ENCODE measurements at regions of chr11 and their contacts with region 1.

Region 1: DNA sequence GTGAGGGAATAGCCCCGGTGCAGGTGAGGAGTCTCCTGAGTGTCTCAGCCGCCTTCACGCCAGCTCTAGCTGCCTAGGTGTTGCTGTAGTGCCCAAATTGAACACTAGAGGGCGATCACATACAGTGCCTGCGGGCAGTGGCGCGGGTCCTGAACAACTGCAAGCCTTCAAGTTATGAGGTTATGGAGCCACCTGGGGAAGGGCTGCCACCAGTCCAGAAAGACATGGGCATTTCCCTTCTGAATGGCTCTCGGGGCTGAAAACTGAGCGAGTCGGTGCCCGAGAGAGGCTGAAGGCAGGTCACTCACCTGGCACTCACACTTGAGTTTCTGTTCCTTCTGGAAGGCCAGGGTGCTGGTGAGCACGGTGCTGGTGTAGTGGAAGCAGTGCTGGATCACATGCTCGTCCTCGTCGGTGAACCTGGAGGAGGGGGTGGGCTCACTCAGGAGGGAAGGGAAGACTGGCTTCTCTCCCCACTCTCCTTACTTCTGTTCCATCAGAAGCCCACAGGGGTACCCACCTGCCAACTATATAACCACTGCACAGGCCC is 88.4 kb downstream of the PDE2A start:
- DNase-seq: peak; percentile 44 to 67 (median 61)
- H3K4me3 ChIP-seq: peak overlapping the region; percentile 55
- H3K4me3 Mint-ChIP-seq: peak overlapping the region; percentile 85 to 91 (median 91)
- H3K27ac ChIP-seq: no peak overlapping the region
- H3K27ac Mint-ChIP-seq: peak overlapping the region in 6 of 8 donors; percentile 35 to 96 (median 59)
- H3K4me1 ChIP-seq: peaks cover 30% of the 10 kb centered on the region
- H3K4me1 Mint-ChIP-seq: peaks cover 34 to 38% (median 34%) of the 10 kb centered on the region in 3 donors
- H3K27me3 ChIP-seq: peaks cover 19% of the 10 kb centered on the region
- H3K27me3 Mint-ChIP-seq: peaks cover 31 to 38% of the 10 kb centered on the region in 2 donors

Region 2: DNA sequence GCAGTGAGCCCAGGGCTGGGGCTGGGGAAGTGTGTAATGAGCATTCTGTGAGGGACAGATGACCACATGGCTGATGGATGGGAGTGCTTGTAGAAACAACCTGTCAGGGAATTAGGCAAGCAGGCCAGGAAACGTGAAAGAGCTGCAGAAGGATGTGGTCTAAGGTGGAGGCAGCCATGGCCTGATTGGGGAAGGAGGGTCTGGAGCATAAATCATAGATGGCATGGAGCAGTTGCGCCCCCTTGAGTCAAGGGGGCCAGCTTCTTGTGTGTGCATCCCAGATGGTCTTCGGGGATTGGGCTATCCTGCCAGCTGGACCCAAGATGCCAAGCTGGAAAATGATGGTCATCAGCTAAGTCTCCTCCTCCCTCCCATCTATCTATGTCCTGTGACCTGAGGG is 32.1 kb before region 1 on chr11:
- CTCF ChIA-PET with region 1: no interaction called
- POLR2A ChIA-PET with region 1: no interaction called
- DNase-seq: peak in 3 of 5 donors; percentile 17 to 32 (median 31)
- H3K4me3 ChIP-seq: no peak overlapping the region
- H3K4me3 Mint-ChIP-seq: peak overlapping the region in 1 of 7 donors; percentile 24
- H3K27ac ChIP-seq: no peak overlapping the region
- H3K27ac Mint-ChIP-seq: peak overlapping the region in 1 of 8 donors; percentile 37
- H3K4me1 ChIP-seq: no peaks in the 10 kb centered on the region
- H3K4me1 Mint-ChIP-seq: peaks cover 10 to 20% (median 16%) of the 10 kb centered on the region in 3 donors
- H3K27me3 ChIP-seq: no peaks in the 10 kb centered on the region
- H3K27me3 Mint-ChIP-seq: peaks cover 5 to 14% of the 10 kb centered on the region in 2 donors

Region 3: GRCh38 chr11:72573072-72573854 is 12.6 kb before region 1 on chr11:
- CTCF ChIA-PET with region 1: interaction called, 17 read pairs
- POLR2A ChIA-PET with region 1: no interaction called
- DNase-seq: no peak
- H3K4me3 ChIP-seq: no peak overlapping the region
- H3K4me3 Mint-ChIP-seq: no peak overlapping the region
- H3K27ac ChIP-seq: no peak overlapping the region
- H3K27ac Mint-ChIP-seq: peak overlapping the region in 2 of 8 donors; percentile 30 to 55
- H3K4me1 ChIP-seq: no peaks in the 10 kb centered on the region
- H3K4me1 Mint-ChIP-seq: peaks cover 9 to 16% (median 12%) of the 10 kb centered on the region in 3 donors
- H3K27me3 ChIP-seq: no peaks in the 10 kb centered on the region
- H3K27me3 Mint-ChIP-seq: peaks cover 14 to 34% of the 10 kb centered on the region in 2 donors

Region 4: GRCh38 chr11:72625691-72626413 is 40.0 kb after region 1 on chr11:
- CTCF ChIA-PET with region 1: no interaction called
- POLR2A ChIA-PET with region 1: no interaction called
- DNase-seq: no peak
- H3K4me3 ChIP-seq: no peak overlapping the region
- H3K4me3 Mint-ChIP-seq: no peak overlapping the region
- H3K27ac ChIP-seq: no peak overlapping the region
- H3K27ac Mint-ChIP-seq: no peak overlapping the region
- H3K4me1 ChIP-seq: peaks cover 7% of the 10 kb centered on the region
- H3K4me1 Mint-ChIP-seq: peaks cover 7 to 21% (median 17%) of the 10 kb centered on the region in 3 donors
- H3K27me3 ChIP-seq: no peaks in the 10 kb centered on the region
- H3K27me3 Mint-ChIP-seq: peaks cover 5 to 10% of the 10 kb centered on the region in 2 donors

Region 5: DNA sequence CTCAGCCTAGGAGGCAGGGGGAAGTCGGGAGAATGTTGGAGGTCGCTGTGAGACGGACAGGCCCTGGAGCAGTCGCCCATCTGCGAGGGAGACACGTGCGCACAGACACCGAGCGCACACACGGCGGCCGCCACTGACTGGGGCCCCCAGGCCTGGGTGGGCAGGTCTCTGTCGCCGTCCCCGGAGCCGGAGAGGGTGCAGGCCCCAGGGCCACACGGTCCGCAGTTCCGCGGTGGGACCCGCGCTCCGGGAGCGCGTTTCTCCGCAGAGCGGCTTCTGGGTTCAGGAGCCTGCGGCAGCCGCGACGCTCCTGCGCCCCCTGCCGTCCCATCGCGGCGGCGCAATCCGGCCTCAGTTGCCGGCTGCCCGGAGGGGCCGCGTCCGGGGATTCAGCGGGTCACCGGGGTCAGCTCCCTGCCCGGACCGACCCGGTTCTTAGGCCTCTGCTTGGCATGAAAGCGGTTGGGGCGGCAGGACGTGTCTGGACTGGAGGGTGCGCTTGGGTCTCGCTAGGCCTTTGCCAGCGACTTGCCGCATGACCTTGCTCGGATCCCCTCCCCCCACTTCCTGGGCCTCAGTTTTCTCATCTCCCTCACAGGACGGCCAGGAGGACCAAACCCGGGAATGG is 57.2 kb after region 1 on chr11:
- CTCF ChIA-PET with region 1: interaction called, 28 read pairs
- POLR2A ChIA-PET with region 1: no interaction called
- DNase-seq: peak; percentile 48 to 69 (median 60)
- H3K4me3 ChIP-seq: peak overlapping the region; percentile 55
- H3K4me3 Mint-ChIP-seq: peak overlapping the region in 6 of 7 donors; percentile 21 to 84 (median 69)
- H3K27ac ChIP-seq: no peak overlapping the region
- H3K27ac Mint-ChIP-seq: no peak overlapping the region
- H3K4me1 ChIP-seq: peaks cover 5% of the 10 kb centered on the region
- H3K4me1 Mint-ChIP-seq: no peaks in the 10 kb centered on the region
- H3K27me3 ChIP-seq: peaks cover 23% of the 10 kb centered on the region
- H3K27me3 Mint-ChIP-seq: peaks cover 0 to 4% of the 10 kb centered on the region in 2 donors

Region 6: GRCh38 chr11:72683782-72684200 is 98.0 kb after region 1 on chr11:
- CTCF ChIA-PET with region 1: interaction called, 19 read pairs
- POLR2A ChIA-PET with region 1: no interaction called
- DNase-seq: peak; percentile 43 to 71 (median 46)
- H3K4me3 ChIP-seq: no peak overlapping the region
- H3K4me3 Mint-ChIP-seq: no peak overlapping the region
- H3K27ac ChIP-seq: no peak overlapping the region
- H3K27ac Mint-ChIP-seq: peak overlapping the region in 3 of 8 donors; percentile 19 to 51 (median 42)
- H3K4me1 ChIP-seq: no peaks in the 10 kb centered on the region
- H3K4me1 Mint-ChIP-seq: peaks cover 17 to 25% (median 21%) of the 10 kb centered on the region in 3 donors
- H3K27me3 ChIP-seq: no peaks in the 10 kb centered on the region
- H3K27me3 Mint-ChIP-seq: no peaks in the 10 kb centered on the region

Measured in CD8-positive, alpha-beta memory T cell (primary cell).